CD8-positive, alpha-beta T cell (primary cell): ENCODE measurements at regions of chr2 and their contacts with region 1.

Region 1: DNA sequence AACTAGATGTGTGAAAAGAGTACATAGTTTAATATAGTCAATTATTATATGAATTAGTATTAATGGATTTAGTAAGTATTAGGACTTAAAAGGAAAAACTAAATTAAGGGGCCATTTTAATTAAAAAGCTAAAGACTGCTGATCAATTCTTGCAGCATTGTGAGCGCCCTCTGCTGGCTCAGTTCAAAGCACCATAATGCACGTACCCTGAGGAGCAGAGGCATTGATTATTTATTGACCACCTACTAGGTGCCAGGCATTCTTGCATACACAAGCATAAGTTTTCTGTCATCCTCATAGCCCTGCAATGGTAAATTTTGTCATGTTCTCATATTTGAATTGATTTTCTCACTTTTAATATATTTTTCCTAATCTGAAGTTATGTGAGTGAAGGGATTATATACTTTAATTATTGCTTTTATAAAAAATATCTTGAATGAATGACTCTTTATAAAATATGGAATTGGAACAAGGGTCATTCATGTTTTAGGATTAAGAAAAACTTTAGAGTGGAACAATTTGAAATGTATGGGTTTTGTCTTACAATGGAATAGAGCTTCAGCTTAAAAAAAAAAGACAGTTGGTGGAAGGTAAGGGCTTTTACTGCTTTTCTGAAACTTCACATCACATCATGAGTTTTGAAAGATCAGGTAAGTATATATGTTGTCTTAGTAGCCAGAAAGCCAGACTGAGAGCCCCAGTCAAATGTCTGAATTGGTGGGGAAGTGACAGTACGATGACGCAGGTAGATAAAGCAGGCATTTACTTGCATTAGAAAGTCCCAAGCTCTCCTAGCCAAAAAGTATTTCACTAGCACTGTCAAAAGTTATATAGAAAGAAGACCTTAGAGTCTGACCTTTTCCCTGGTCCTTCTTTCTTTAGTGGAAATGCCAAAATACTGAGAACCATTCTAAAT is 9.7 kb downstream of the ITGA4 start:
- DNase-seq: peak; percentile 56 to 88 (median 80)
- ATAC-seq: peak; percentile 52
- H3K4me3 ChIP-seq: no peak overlapping the region
- H3K4me3 Mint-ChIP-seq: peak overlapping the region; percentile 66
- H3K27ac ChIP-seq: peak overlapping the region; percentile 12 to 85
- H3K27ac Mint-ChIP-seq: peak overlapping the region; percentile 93
- H3K4me1 ChIP-seq: peaks cover 76% of the 10 kb centered on the region
- H3K4me1 Mint-ChIP-seq: peaks cover 86% of the 10 kb centered on the region
- H3K27me3 ChIP-seq: no peaks in the 10 kb centered on the region
- H3K27me3 Mint-ChIP-seq: no peaks in the 10 kb centered on the region
- CTCF ChIP-seq: peak; percentile 75

Region 2: GRCh38 chr2:181077128-181077709 is 389.7 kb before region 1 on chr2:
- CTCF ChIA-PET with region 1: interaction called, 21 read pairs
- POLR2A ChIA-PET with region 1: no interaction called
- intact Hi-C with region 1: loop called in 1 of 2 experiments (anchors 1 kb)
- DNase-seq: peak in 3 of 9 experiments; percentile 8 to 82 (median 76)
- ATAC-seq: peak; percentile 94
- H3K4me3 ChIP-seq: no peak overlapping the region
- H3K4me3 Mint-ChIP-seq: no peak overlapping the region
- H3K27ac ChIP-seq: no peak overlapping the region
- H3K27ac Mint-ChIP-seq: no peak overlapping the region
- H3K4me1 ChIP-seq: no peaks in the 10 kb centered on the region
- H3K4me1 Mint-ChIP-seq: no peaks in the 10 kb centered on the region
- H3K27me3 ChIP-seq: no peaks in the 10 kb centered on the region
- H3K27me3 Mint-ChIP-seq: no peaks in the 10 kb centered on the region
- CTCF ChIP-seq: peak; percentile 90

Region 3: GRCh38 chr2:181083140-181083539 is 383.8 kb before region 1 on chr2:
- CTCF ChIA-PET with region 1: interaction called, 21 read pairs
- POLR2A ChIA-PET with region 1: no interaction called
- intact Hi-C with region 1: no loop called
- DNase-seq: no peak
- ATAC-seq: no peak
- H3K4me3 ChIP-seq: no peak overlapping the region
- H3K4me3 Mint-ChIP-seq: no peak overlapping the region
- H3K27ac ChIP-seq: no peak overlapping the region
- H3K27ac Mint-ChIP-seq: no peak overlapping the region
- H3K4me1 ChIP-seq: no peaks in the 10 kb centered on the region
- H3K4me1 Mint-ChIP-seq: no peaks in the 10 kb centered on the region
- H3K27me3 ChIP-seq: no peaks in the 10 kb centered on the region
- H3K27me3 Mint-ChIP-seq: peaks cover 9% of the 10 kb centered on the region
- CTCF ChIP-seq: no peak

Region 4: DNA sequence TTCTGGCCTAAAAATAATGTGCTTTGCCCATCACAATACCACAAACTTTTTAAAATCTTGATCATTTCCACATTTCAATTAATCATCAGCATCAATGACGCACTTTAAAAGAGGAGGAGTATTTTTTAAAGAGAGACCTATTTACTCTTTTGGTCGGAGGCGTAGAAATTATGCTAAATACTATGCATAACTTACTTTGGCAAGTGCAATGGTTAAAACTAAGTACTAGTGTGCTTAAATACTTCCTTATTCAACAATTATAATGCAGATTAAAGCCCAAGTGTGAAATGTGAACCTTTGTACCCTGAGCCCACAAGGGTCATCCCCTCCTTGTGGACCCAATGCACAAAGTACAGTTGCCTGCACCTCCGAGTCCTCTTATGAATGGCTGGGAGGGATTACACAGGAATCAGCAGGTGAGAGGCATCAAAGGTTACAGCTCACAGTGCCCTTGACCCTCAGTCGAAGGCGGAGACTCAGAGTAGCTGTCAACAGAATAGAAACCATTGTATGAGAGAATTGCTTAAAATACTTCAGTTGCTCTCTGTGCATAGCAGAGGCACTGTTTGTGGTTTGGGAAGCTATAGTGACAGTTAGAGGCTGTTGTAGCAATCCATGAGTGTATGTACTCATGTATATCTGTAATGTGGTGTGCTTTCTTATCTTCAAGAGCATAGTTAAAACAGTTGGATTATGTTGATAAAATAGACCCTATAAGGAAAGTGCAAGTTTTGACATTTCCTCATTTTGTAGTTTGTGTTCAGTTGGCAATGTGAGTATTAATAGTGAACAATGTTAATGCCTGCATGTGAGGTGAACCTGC is 161.4 kb before region 1 on chr2:
- CTCF ChIA-PET with region 1: interaction called, 18 read pairs
- POLR2A ChIA-PET with region 1: interaction called, 3 read pairs
- intact Hi-C with region 1: no loop called
- DNase-seq: peak in 7 of 9 experiments; percentile 31 to 76 (median 54)
- ATAC-seq: peak; percentile 67
- H3K4me3 ChIP-seq: no peak overlapping the region
- H3K4me3 Mint-ChIP-seq: peak overlapping the region; percentile 71
- H3K27ac ChIP-seq: peak overlapping the region; percentile 79
- H3K27ac Mint-ChIP-seq: peak overlapping the region; percentile 96
- H3K4me1 ChIP-seq: peaks cover 78% of the 10 kb centered on the region
- H3K4me1 Mint-ChIP-seq: peaks cover 80% of the 10 kb centered on the region
- H3K27me3 ChIP-seq: no peaks in the 10 kb centered on the region
- H3K27me3 Mint-ChIP-seq: no peaks in the 10 kb centered on the region
- CTCF ChIP-seq: no peak

Region 5: GRCh38 chr2:181364492-181365170 is 102.3 kb before region 1 on chr2:
- CTCF ChIA-PET with region 1: no interaction called
- POLR2A ChIA-PET with region 1: no interaction called
- intact Hi-C with region 1: no loop called
- DNase-seq: no peak
- ATAC-seq: no peak
- H3K4me3 ChIP-seq: no peak overlapping the region
- H3K4me3 Mint-ChIP-seq: no peak overlapping the region
- H3K27ac ChIP-seq: no peak overlapping the region
- H3K27ac Mint-ChIP-seq: no peak overlapping the region
- H3K4me1 ChIP-seq: no peaks in the 10 kb centered on the region
- H3K4me1 Mint-ChIP-seq: no peaks in the 10 kb centered on the region
- H3K27me3 ChIP-seq: no peaks in the 10 kb centered on the region
- H3K27me3 Mint-ChIP-seq: no peaks in the 10 kb centered on the region
- CTCF ChIP-seq: no peak

Region 6: GRCh38 chr2:181438261-181438660 is 28.7 kb before region 1 on chr2:
- CTCF ChIA-PET with region 1: interaction called, 18 read pairs
- POLR2A ChIA-PET with region 1: no interaction called
- intact Hi-C with region 1: no loop called
- DNase-seq: peak in 6 of 9 experiments; percentile 28 to 65 (median 40)
- ATAC-seq: no peak
- H3K4me3 ChIP-seq: no peak overlapping the region
- H3K4me3 Mint-ChIP-seq: no peak overlapping the region
- H3K27ac ChIP-seq: no peak overlapping the region
- H3K27ac Mint-ChIP-seq: no peak overlapping the region
- H3K4me1 ChIP-seq: no peaks in the 10 kb centered on the region
- H3K4me1 Mint-ChIP-seq: peaks cover 25% of the 10 kb centered on the region
- H3K27me3 ChIP-seq: no peaks in the 10 kb centered on the region
- H3K27me3 Mint-ChIP-seq: no peaks in the 10 kb centered on the region
- CTCF ChIP-seq: no peak

Region 7: GRCh38 chr2:181483876-181484275 is 17.0 kb after region 1 on chr2:
- CTCF ChIA-PET with region 1: interaction called, 5 read pairs
- POLR2A ChIA-PET with region 1: interaction called, 3 read pairs
- intact Hi-C with region 1: loop called in 1 of 2 experiments (anchors 2 kb)
- DNase-seq: no peak
- ATAC-seq: no peak
- H3K4me3 ChIP-seq: no peak overlapping the region
- H3K4me3 Mint-ChIP-seq: no peak overlapping the region
- H3K27ac ChIP-seq: no peak overlapping the region
- H3K27ac Mint-ChIP-seq: peak overlapping the region; percentile 69
- H3K4me1 ChIP-seq: no peaks in the 10 kb centered on the region
- H3K4me1 Mint-ChIP-seq: peaks cover 26% of the 10 kb centered on the region
- H3K27me3 ChIP-seq: no peaks in the 10 kb centered on the region
- H3K27me3 Mint-ChIP-seq: no peaks in the 10 kb centered on the region
- CTCF ChIP-seq: no peak

Region 8: GRCh38 chr2:181715033-181715630 is 248.2 kb after region 1 on chr2:
- CTCF ChIA-PET with region 1: interaction called, 3 read pairs
- POLR2A ChIA-PET with region 1: no interaction called
- intact Hi-C with region 1: loop called in 1 of 2 experiments (anchors 10 kb)
- DNase-seq: peak; percentile 31 to 83 (median 71)
- ATAC-seq: peak; percentile 83
- H3K4me3 ChIP-seq: no peak overlapping the region
- H3K4me3 Mint-ChIP-seq: no peak overlapping the region
- H3K27ac ChIP-seq: no peak overlapping the region
- H3K27ac Mint-ChIP-seq: no peak overlapping the region
- H3K4me1 ChIP-seq: no peaks in the 10 kb centered on the region
- H3K4me1 Mint-ChIP-seq: no peaks in the 10 kb centered on the region
- H3K27me3 ChIP-seq: no peaks in the 10 kb centered on the region
- H3K27me3 Mint-ChIP-seq: peaks cover 2% of the 10 kb centered on the region
- CTCF ChIP-seq: peak; percentile 69